GM12878 (cell line): ENCODE measurements at regions of chr14 and their contacts with region 1.

Region 1: DNA sequence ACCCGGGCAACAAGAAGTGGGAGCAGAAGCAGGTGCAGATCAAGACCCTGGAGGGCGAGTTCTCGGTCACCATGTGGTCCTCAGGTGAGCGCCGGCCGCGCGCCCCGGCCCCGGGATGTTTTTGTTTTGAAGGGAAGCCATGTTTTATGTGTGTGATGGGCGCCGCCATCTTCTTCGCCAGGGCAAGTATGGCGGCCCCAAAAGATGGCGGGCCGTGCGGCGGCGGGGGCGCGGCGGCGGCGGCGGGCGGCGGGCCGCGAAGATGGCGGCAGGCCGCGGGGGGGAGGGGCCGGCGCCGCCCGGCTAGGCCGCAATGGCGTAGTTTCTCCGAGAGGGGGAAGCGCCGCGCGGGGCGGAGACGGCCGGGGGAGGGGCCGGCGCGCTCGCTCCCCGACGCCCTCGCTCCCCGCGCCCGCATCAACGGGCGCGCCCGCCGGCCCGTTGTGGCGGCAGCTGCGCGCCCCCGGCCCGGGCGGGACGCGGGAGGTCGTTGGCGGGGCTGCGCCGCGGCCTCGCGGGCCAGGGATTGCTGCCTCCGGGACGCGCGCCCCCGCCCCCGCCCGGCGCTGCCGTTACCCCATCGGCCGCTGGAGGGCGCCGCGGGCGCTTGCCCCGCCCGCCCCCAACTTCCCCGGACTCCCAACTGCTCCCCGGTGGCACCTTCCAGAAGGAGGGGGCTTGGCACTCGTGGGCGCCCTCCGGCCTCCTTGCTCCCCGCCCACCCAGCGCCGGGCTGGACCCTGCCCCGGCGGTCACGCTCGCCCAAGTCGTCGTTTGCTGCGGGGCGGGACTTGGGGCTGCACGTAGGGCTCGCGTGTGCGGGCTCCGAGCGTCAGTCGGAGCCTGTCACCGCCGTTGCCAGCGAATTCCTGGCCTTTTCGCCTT is 1.1 kb downstream of the YY1 start:
- DNase-seq: no peak
- ATAC-seq: peak; percentile 52
- H3K4me3 ChIP-seq: peak overlapping the region; percentile 95
- H3K27ac ChIP-seq: peak overlapping the region; percentile 74
- H3K4me1 ChIP-seq: no peaks in the 10 kb centered on the region
- H3K27me3 ChIP-seq: no peaks in the 10 kb centered on the region
- CTCF ChIP-seq: peak; percentile 58 to 71 (median 71); a peak in 5 of 6 replicates
- EP300 ChIP-seq: no peak
- POLR2A ChIP-seq: peak; percentile 60; the same call in 1 of the 2 replicates
- RAD21 ChIP-seq: peak; percentile 29; the same call in 1 of the 2 replicates

Region 2: GRCh38 chr14:100213956-100214774 is 25.9 kb before region 1 on chr14:
- CTCF ChIA-PET with region 1: interaction called, 5 read pairs
- POLR2A ChIA-PET with region 1: interaction called, 7 read pairs
- RAD21 ChIA-PET with region 1: interaction called, 3 read pairs
- SMC1A ChIA-PET with region 1: interaction called, 6 read pairs
- in situ Hi-C with region 1: no loop called
- intact Hi-C with region 1: loop called (anchors 2 kb)
- DNase-seq: no peak
- ATAC-seq: peak; percentile 98
- H3K4me3 ChIP-seq: peak overlapping the region; percentile 90
- H3K27ac ChIP-seq: peak overlapping the region; percentile 90
- H3K4me1 ChIP-seq: peaks cover 9% of the 10 kb centered on the region; the same call in 1 of the 2 replicates
- H3K27me3 ChIP-seq: no peaks in the 10 kb centered on the region
- CTCF ChIP-seq: no peak
- EP300 ChIP-seq: no peak
- POLR2A ChIP-seq: peak; percentile 97
- RAD21 ChIP-seq: no peak

Region 3: DNA sequence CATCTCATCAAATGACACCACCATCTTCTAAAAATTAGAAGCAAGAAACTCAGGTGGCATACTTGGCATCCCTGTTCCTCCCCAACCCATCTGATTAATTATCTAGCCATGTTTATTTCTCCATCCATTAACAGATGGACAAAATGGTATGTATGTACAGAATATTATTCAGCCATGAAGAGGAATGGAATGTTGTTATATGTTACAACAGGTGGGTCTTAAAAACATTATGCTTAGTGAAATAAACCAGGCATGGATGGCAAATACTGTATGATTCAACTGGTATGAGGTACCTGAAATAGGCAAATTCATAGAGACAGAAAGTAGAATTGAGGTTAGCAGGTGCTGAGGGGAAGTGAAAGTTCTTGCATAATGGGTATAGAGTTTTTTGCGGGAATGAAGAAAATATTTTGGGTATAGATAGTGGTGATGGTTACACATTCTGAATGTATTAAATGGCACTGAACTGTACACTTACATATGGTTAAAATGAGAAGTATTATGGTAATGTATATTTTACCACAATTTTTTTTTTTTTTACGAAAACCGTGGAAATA is 16.3 kb after region 1 on chr14:
- CTCF ChIA-PET with region 1: interaction called, 7 read pairs
- POLR2A ChIA-PET with region 1: interaction called, 9 read pairs
- RAD21 ChIA-PET with region 1: interaction called, 4 read pairs
- SMC1A ChIA-PET with region 1: interaction called, 7 read pairs
- in situ Hi-C with region 1: no loop called
- intact Hi-C with region 1: loop called (anchors 2 kb)
- DNase-seq: no peak
- ATAC-seq: peak; percentile 86
- H3K4me3 ChIP-seq: peak overlapping the region; percentile 37; the same call in 1 of the 2 replicates
- H3K27ac ChIP-seq: no peak overlapping the region; the same call in 1 of the 2 replicates
- H3K4me1 ChIP-seq: peaks cover 52% of the 10 kb centered on the region
- H3K27me3 ChIP-seq: no peaks in the 10 kb centered on the region
- CTCF ChIP-seq: no peak
- EP300 ChIP-seq: peak in 1 of 2 experiments; percentile 51; a peak in 1 of 4 replicates
- POLR2A ChIP-seq: no peak
- RAD21 ChIP-seq: no peak